ENCODE measurements at regions of chr1 and their contacts with region 1.

Region 1: GRCh38 chr1:42035830-42036604 is 117.2 kb upstream of the GUCA2B start:
- DNase-seq: peak; percentile 93 to 94
- ATAC-seq: peak; percentile 94 to 95
- H3K4me3 ChIP-seq: peak overlapping the region; percentile 54 to 100 (median 79)
- H3K27ac ChIP-seq: peak overlapping the region; percentile 62 to 80 (median 76)
- H3K4me1 ChIP-seq: peaks cover 7 to 12% of the 10 kb centered on the region in 2 donors
- H3K27me3 ChIP-seq: no peaks in the 10 kb centered on the region
- CTCF ChIP-seq: no peak
- POLR2A ChIP-seq: peak; percentile 36 to 53

Region 2: DNA sequence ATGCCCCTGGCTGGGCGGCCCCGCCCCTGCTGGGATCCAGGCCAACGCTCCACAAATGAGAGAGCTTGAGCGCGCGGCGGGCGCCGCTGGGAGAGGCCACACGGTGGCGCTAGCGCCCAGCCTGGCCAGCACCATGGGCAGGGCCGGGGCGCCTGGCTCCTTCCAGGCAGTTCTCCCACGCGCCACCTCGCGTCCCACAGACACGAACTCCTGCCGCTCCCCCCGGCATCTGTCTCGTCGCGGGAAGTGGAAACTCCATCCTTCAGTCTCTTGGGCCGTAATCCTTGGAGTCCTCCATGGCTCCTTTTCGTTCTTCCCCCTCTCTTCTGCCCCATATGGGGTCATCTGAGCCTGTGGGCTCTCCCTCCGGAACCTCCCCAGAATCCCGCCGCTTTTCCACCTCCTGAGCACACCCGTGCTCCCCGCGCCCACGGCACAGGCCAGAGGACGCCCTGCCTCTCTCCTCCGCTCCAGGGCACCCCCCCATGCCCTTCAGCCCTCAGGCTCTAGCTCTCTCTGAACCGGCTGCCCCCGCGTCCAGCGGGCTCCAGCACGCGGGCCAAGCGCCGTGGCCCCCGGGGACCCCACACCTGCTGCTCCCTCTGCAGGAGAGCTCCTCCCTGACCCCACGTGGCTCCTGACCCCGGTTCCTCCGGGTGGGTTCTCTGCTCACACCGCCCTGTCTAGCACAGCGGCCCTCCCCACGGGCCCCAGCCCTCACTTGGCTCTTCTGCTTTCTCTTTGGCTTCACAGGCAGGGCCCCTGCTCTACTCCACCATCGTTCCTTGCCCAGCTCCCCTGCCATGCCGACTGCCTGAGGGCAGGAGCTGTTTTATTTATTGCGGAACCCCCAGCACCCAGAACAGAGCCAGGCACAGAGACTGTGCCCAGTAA is 519.6 kb before region 1 on chr1:
- in situ Hi-C with region 1: no loop called
- intact Hi-C with region 1: loop called (anchors 10 kb)
- DNase-seq: peak; percentile 72 to 89
- ATAC-seq: peak; percentile 92 to 93
- H3K4me3 ChIP-seq: peak overlapping the region; percentile 60 to 76 (median 66)
- H3K27ac ChIP-seq: peak overlapping the region; percentile 56 to 73 (median 66)
- H3K4me1 ChIP-seq: peaks cover 17 to 24% of the 10 kb centered on the region in 2 donors
- H3K27me3 ChIP-seq: no peaks in the 10 kb centered on the region
- CTCF ChIP-seq: peak; percentile 85 to 97 (median 93)
- POLR2A ChIP-seq: peak in 1 of 2 donors; percentile 35

Region 3: DNA sequence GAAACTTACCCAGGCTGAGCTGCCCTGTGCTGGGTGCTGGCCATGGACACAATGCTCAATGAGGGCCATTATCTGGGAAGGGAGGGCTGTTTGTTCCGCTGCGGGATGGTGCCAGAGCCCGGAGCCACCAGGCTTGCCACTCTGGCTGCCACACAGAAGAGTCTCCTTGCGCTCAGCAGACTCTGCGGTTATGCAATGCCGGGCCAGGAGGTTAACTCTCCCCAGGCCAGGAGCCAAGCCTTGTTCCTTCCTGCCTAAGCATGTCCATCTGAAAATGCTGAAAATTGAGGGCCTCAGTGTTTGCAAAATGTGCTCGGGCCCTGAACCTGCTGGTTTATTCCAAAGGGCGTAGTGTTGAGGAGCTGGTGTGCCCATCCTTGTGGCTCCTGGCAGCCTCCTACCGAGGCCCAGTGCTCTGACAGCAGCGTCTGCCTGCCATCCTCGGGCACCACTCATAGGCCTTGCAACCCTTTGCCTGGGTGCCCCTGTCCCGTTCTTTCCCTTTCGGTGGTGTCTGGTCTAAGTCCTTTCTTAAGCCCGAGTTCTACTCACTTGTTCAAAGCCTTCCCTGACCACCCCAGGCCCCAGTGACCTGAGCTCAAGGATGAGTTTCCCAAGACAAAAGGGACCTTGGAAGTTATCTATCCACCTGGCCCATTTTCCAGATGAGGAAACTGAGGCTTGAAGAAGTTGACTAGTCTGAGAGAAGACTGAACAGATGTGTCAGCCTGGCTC is 417.8 kb before region 1 on chr1:
- in situ Hi-C with region 1: no loop called
- intact Hi-C with region 1: loop called (anchors 5 kb)
- DNase-seq: peak; percentile 91 to 93
- ATAC-seq: peak; percentile 97 to 99
- H3K4me3 ChIP-seq: no peak overlapping the region
- H3K27ac ChIP-seq: peak overlapping the region; percentile 59 to 76 (median 64)
- H3K4me1 ChIP-seq: peaks cover 14 to 15% of the 10 kb centered on the region in 2 donors
- H3K27me3 ChIP-seq: no peaks in the 10 kb centered on the region
- CTCF ChIP-seq: no peak
- POLR2A ChIP-seq: no peak

Region 4: GRCh38 chr1:41812051-41812450 is 224.0 kb before region 1 on chr1:
- in situ Hi-C with region 1: no loop called
- intact Hi-C with region 1: loop called (anchors 2 kb)
- DNase-seq: peak in 1 of 2 donors; percentile 60
- ATAC-seq: peak in 1 of 2 donors; percentile 36
- H3K4me3 ChIP-seq: no peak overlapping the region
- H3K27ac ChIP-seq: peak overlapping the region; percentile 50 to 79 (median 75)
- H3K4me1 ChIP-seq: peaks cover 40 to 44% of the 10 kb centered on the region in 2 donors
- H3K27me3 ChIP-seq: no peaks in the 10 kb centered on the region
- CTCF ChIP-seq: peak; percentile 42 to 68 (median 57)
- POLR2A ChIP-seq: no peak

Region 5: DNA sequence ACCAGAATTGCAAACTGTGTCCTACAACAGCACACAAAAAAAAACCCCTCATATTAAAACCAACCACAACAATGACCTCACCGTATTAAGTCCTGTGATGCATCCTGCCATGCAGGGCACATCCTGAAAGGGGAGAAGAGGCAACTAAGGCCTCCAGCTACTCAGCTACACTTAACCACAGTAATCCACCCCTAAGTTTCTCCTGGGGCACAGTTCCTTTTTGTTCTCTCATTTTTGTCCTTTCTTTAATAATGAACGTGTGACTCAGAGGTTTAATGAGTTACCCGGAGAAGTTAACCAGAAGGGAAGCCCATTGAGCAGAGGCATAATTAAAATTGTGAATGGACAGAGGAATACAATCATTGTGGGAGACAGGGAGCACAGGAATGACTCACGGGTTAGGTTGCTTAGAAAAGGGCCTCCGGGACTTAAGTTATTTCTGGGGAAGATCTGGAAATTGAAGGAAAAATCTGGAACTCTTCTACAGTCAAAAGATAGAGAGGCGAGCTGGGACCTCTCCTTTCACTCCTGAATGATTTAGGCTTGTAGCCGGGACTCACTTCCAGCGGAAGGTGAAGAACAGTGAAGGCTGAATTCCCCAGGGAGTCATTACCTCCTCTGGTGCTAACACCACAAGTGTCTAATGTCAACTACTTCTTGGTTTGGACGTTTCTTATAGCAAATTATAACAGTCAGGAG is 80.4 kb before region 1 on chr1:
- in situ Hi-C with region 1: no loop called
- intact Hi-C with region 1: loop called (anchors 1 kb)
- DNase-seq: no peak
- ATAC-seq: no peak
- H3K4me3 ChIP-seq: no peak overlapping the region
- H3K27ac ChIP-seq: peak overlapping the region in 1 of 4 donors; percentile 21
- H3K4me1 ChIP-seq: peaks cover 23 to 24% of the 10 kb centered on the region in 2 donors
- H3K27me3 ChIP-seq: no peaks in the 10 kb centered on the region
- CTCF ChIP-seq: no peak
- POLR2A ChIP-seq: no peak

Region 6: DNA sequence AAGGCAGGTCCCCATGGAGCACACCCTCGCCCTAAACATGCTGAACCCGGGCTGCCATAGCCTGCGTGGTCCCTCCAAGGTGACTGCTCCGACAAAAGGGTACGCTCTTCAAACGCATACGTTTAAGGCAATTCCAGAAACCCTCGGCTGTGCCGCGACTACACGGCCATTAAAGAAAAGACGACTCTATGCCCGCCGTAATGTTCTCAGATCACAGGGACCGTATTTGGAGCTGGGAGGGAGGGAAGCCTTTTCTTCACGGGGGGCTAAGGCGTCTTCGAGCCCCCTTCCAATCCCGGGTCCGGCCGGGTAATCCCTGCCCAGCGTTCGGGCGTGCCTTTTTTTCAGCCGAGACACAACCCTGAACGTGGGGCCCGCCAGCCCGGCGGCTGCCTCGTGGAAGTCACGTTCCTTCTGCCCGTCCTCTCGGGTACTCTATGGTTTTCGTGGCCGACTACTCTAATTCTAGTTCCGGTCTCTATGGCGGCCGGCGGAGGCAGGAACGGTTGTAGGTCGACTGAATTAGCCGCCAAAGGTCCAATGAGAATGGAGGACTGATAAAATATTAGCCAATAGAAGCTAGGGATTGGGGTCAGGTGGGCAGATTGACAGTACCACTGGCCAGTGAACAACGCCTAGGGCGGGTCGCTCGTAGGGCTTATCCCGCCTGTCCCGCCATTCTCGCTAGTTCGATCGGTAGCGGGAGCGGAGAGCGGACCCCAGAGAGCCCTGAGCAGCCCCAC is 645.9 kb after region 1 on chr1 and contains the start of gene YBX1:
- in situ Hi-C with region 1: no loop called
- intact Hi-C with region 1: loop called (anchors 10 kb)
- DNase-seq: peak; percentile 98 to 99
- ATAC-seq: peak; percentile 94 to 96
- H3K4me3 ChIP-seq: peak within 1 kb of the TSS; percentile 84 to 92 (median 86)
- H3K27ac ChIP-seq: peak within 1 kb of the TSS; percentile 97 to 98 (median 98)
- H3K4me1 ChIP-seq: peaks cover 43 to 44% of the 10 kb centered on the region in 2 donors
- H3K27me3 ChIP-seq: no peaks in the 10 kb centered on the region
- CTCF ChIP-seq: no peak
- POLR2A ChIP-seq: peak; percentile 89 to 95
- total RNA-seq, gene YBX1: 861 to 1,251 (median 1,022) TPM

Measured in gastrocnemius medialis (tissue), 4 donors.